HEK293 (cell line): ENCODE measurements at regions of chr12 and their contacts with region 1.

Region 1: DNA sequence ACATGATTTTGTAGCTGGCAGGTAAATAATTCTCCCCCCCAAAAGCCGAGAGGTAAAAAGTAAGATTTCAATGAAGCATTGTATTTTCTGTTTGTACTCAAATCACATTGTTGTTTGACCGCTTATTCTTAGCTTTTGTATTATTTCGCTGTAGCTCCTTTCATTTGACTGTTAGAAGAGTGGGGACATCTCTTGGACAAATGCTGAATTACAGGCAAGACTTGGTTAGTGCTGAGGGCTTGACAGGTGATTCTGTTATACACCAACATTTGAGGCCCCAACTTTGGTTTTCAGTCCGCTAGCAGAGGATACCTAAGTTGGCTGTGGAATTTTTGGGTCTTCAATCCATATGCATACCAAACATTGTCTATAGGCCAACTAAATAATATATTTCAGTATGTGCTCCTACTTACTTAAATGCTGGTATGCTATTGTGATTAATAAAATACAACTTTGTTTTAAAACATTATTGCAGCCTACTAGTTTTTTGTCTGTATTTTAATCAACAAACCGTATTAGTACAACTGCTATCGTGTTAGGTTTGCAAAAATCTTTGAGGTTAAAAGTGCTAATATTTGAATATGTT is 102.2 kb downstream of the ERC1 start:
- H3K4me3 ChIP-seq: no peak overlapping the region
- H3K27ac ChIP-seq: no peak overlapping the region
- H3K4me1 ChIP-seq: 0 out of 2 replicates have a peak, but pooled peaks cover 5% of the 10 kb centered on the region
- CTCF ChIP-seq: no peak; the same call in 1 of the 2 replicates

Region 2: DNA sequence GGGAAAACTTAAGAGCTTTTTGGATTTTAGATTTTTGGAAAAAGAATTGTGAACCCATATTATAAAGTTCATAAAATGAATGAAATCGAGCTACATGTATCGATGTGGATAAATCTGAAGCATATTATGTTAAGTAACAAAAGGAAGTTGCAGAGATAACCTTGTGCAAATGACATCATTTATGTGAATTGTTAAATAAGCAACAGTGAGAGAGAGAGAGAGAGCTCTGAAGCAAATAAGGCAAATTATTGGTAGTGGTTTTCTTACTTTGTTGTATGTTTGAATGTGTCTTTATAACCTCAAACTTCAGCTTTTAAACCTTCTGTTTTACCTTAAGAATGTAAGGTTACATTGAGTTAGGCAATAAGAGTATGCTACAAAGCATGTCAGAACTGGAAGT is 23.4 kb before region 1 on chr12:
- CTCF ChIA-PET with region 1: interaction called, 12 read pairs
- POLR2A ChIA-PET with region 1: no interaction called
- H3K4me3 ChIP-seq: no peak overlapping the region
- H3K27ac ChIP-seq: no peak overlapping the region
- H3K4me1 ChIP-seq: peaks cover 13% of the 10 kb centered on the region
- CTCF ChIP-seq: no peak

Region 3: DNA sequence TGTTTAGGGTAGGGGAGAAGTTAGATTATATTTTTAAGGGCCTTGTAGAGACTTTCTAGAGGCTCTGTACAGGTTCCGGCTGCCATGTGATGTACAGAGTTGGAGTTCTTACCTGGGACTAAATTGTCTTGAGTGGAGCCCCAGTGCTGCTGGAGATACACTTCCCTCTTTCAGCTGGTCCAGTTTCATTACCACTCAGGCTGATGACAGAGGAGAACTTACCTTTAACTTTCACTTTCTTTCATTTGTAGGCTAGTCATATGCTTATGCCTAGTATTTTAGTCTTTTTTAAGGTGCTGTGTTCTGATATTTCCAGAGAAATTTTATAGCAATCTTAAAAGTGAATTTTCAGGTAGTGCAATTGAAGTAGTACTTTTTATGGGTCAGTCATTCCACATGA is 15.0 kb after region 1 on chr12:
- CTCF ChIA-PET with region 1: interaction called, 21 read pairs
- POLR2A ChIA-PET with region 1: no interaction called
- H3K4me3 ChIP-seq: no peak overlapping the region
- H3K27ac ChIP-seq: no peak overlapping the region
- H3K4me1 ChIP-seq: no peaks in the 10 kb centered on the region
- CTCF ChIP-seq: no peak